ENCODE measurements at regions of chr20 and their contacts with region 1.

Region 1: GRCh38 chr20:62943396-62943795 is 5.4 kb downstream of the GID8 start:
- DNase-seq: no peak
- ATAC-seq: no peak
- H3K4me3 ChIP-seq: no peak overlapping the region
- H3K27ac ChIP-seq: no peak overlapping the region
- H3K4me1 ChIP-seq: peaks cover 11% of the 10 kb centered on the region
- H3K27me3 ChIP-seq: no peaks in the 10 kb centered on the region
- CTCF ChIP-seq: no peak

Region 2: DNA sequence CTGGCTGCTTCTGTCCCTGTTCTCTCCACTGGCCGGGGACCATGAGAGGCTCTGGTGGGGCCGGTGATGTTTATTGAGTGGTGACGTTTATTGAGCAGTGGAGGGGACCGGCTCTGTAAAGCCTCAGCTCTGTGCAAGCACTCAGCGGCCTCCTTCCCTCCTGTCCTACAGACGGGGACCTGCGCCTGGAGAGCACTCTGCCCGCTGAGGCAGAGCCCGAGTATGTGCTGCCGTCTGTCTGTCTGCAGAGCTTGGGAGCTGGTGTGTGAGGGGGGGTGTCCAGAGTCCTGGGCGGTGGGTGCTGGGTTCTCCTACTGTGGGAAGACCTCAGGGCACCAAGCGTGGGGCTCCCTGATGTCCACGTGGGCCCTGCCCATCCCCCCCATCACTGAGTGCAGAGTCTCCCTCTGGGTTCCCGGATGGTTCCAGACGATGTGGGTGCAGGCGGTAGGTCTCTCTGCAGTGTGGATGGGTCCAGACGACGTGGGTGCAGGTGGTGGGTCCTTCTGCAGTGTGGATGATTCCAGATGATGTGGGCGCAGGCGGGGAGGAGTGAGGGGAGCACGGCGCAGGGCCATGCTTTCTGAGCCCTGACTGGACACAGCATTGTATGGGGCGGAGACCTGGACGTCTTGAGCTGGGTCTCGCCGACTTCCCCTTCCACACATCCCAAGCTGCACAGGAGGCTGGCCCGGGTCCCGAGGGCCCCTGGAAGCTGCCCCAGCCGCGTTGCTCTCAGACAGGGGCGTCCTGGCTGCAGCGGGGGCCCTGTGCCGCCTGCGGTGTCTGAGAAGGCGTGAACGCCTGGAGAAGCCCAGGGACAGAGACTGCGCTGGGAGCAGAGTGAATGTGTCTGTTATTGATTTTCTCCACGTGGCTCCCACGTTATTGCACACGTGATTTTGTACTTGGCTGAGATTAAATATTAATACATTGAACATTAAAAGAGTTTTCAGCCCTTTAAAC is 78.2 kb after region 1 on chr20:
- CTCF ChIA-PET with region 1: no interaction called
- POLR2A ChIA-PET with region 1: interaction called, 12 read pairs
- in situ Hi-C with region 1: no loop called
- intact Hi-C with region 1: no loop called
- DNase-seq: no peak
- ATAC-seq: no peak
- H3K4me3 ChIP-seq: no peak overlapping the region
- H3K27ac ChIP-seq: no peak overlapping the region
- H3K4me1 ChIP-seq: no peaks in the 10 kb centered on the region
- H3K27me3 ChIP-seq: no peaks in the 10 kb centered on the region; the same call in 1 of the 2 replicates
- CTCF ChIP-seq: no peak

Measured in Panc1 (cell line).